ENCODE measurements at regions of chr4 and their contacts with region 1.

Region 1: GRCh38 chr4:111283061-111283677 is 660.3 kb upstream of the PITX2 start:
- DNase-seq: peak; percentile 7 to 21
- ATAC-seq: no peak
- H3K4me3 ChIP-seq: no peak overlapping the region
- H3K27ac ChIP-seq: no peak overlapping the region
- H3K4me1 ChIP-seq: no peaks in the 10 kb centered on the region
- H3K27me3 ChIP-seq: no peaks in the 10 kb centered on the region
- CTCF ChIP-seq: peak; percentile 32 to 81 (median 66)

Region 2: GRCh38 chr4:110622841-110623717 is 660.1 kb before region 1 on chr4 and contains the start of gene PITX2:
- intact Hi-C with region 1: loop called in 1 of 10 experiments (anchors 10 kb)
- DNase-seq: peak; percentile 51 to 67
- ATAC-seq: peak; percentile 57 to 94 (median 79)
- H3K4me3 ChIP-seq: peak within 1 kb of the TSS in 9 of 10 donors; percentile 18 to 49 (median 42)
- H3K27ac ChIP-seq: no peak within 1 kb of the TSS
- H3K4me1 ChIP-seq: peaks cover 0 to 38% (median 29%) of the 10 kb centered on the region in 9 donors
- H3K27me3 ChIP-seq: peaks cover 54 to 100% (median 100%) of the 10 kb centered on the region in 7 donors
- CTCF ChIP-seq: no peak
- total RNA-seq, gene PITX2: 0.10 to 0.57 TPM in 2 of 10 donors, not detected in the others

Region 3: DNA sequence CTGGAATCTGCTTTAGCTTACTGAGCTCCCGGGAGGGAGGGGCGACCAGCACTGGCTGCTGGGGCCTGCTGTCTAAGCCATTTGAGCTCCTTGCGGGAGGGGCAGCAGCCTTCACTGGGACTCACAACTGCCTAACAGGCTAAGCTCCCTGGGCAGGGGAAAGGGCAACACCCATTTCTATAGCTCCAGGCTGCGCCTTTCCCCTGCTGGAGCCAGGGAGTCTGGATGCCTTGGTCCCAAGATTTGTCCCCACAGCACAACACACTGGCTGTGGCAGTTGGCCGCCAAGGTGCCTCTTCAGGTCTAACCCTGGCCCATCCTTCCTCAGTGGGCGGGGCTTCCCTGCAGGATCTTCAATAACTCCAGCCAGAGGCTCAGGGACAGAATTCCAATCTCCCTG is 208.5 kb before region 1 on chr4:
- intact Hi-C with region 1: no loop called
- DNase-seq: no peak
- ATAC-seq: no peak
- H3K4me3 ChIP-seq: no peak overlapping the region
- H3K27ac ChIP-seq: no peak overlapping the region
- H3K4me1 ChIP-seq: no peaks in the 10 kb centered on the region
- H3K27me3 ChIP-seq: no peaks in the 10 kb centered on the region
- CTCF ChIP-seq: no peak